Activated CD4-positive, alpha-beta T cell treated with anti-CD3 and anti-CD28 coated beads for 36 hours (primary cell): ENCODE measurements at regions of chr10 and their contacts with region 1.

Region 1: DNA sequence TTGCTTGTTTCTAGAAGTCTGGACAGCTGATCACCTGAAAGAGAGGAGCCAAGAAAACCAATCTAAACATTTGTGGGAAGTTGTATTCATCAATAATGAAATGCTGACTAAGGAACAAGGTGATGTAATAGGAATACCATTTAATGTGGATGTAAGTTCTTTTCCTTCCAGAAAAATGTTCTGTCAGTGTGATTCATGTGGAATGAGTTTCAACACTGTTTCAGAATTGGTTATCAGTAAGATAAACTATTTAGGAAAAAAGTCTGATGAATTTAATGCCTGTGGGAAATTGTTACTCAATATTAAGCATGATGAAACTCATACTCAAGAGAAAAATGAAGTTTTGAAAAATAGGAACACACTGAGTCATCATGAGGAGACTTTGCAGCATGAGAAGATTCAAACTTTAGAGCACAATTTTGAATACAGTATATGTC is 39.8 kb upstream of the ZNF37A start:
- DNase-seq: no peak
- ATAC-seq: no peak
- H3K4me3 Mint-ChIP-seq: no peak overlapping the region
- H3K27ac Mint-ChIP-seq: no peak overlapping the region
- H3K4me1 Mint-ChIP-seq: no peaks in the 10 kb centered on the region
- H3K27me3 Mint-ChIP-seq: no peaks in the 10 kb centered on the region

Region 2: DNA sequence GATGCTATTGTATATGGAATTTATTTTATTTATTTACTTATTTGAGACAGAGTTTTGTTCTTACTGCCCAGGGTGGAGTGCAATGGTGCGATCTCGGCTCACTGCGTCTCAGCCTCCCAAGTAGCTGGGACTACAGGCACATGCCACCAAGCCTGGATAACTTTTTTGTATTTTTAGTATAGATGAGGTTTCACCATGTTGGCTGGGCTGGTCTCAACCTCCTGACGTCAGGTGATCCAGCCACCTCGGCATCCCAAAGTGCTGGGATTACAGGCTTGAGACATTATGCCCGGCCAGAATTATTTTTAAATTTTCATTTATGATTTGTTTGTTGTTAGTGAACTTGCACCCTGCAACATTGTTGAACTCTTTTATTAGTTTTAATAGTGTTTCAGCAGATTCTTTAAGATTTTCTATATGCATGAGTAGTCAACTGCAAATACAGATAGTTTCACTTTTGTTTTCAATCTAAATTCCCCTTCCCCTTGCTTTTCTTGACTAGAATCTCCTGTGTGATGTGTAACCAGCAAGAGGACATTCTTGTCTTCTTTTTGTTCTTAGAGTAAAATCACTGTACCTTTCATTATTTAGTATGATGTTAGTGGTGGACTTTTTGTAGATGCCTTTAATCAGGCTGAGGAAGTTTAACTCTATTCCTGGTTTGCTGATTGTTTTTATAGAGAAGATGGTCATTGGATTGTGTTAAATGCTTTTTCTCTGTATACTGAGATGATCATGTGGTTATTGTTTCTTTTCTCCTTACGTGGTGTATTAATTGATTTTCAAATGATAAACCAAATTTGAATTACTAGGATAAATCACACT is 16.1 kb before region 1 on chr10:
- CTCF ChIA-PET with region 1: no interaction called
- POLR2A ChIA-PET with region 1: no interaction called
- intact Hi-C with region 1: no loop called
- DNase-seq: no peak
- ATAC-seq: peak; percentile 90
- H3K4me3 Mint-ChIP-seq: peak overlapping the region; percentile 56
- H3K27ac Mint-ChIP-seq: peak overlapping the region; percentile 86
- H3K4me1 Mint-ChIP-seq: peaks cover 29% of the 10 kb centered on the region
- H3K27me3 Mint-ChIP-seq: no peaks in the 10 kb centered on the region

Region 3: GRCh38 chr10:38094158-38094920 is 40.0 kb after region 1 on chr10 and contains the start of gene ZNF37A:
- CTCF ChIA-PET with region 1: no interaction called
- POLR2A ChIA-PET with region 1: no interaction called
- intact Hi-C with region 1: loop called in 1 of 2 experiments (anchors 5 kb)
- DNase-seq: peak; percentile 94
- ATAC-seq: peak; percentile 98
- H3K4me3 Mint-ChIP-seq: peak within 1 kb of the TSS; percentile 85
- H3K27ac Mint-ChIP-seq: peak within 1 kb of the TSS; percentile 90
- H3K4me1 Mint-ChIP-seq: peaks cover 31% of the 10 kb centered on the region
- H3K27me3 Mint-ChIP-seq: no peaks in the 10 kb centered on the region
- total RNA-seq, gene ZNF37A: 24.1 to 25.5 TPM

Region 4: DNA sequence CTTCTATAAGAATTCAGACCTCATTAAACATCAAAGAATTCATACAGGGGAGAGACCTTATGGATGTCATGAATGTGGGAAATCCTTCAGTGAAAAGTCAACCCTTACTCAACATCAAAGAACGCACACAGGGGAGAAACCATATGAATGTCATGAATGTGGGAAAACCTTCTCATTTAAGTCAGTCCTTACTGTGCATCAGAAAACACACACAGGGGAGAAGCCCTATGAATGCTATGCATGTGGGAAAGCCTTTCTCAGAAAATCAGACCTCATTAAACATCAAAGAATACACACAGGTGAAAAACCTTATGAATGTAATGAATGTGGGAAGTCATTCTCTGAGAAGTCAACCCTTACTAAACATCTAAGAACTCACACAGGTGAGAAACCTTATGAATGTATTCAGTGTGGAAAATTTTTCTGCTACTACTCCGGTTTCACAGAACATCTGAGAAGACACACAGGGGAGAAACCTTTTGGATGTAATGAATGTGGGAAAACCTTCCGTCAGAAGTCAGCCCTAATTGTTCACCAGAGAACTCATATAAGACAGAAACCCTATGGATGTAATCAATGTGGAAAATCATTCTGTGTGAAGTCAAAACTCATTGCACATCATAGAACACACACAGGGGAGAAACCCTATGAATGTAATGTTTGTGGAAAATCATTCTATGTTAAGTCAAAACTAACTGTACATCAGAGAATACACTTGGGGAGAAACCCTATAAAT is 63.9 kb after region 1 on chr10:
- CTCF ChIA-PET with region 1: interaction called, 3 read pairs
- POLR2A ChIA-PET with region 1: no interaction called
- intact Hi-C with region 1: loop called (anchors 2 to 10 kb)
- DNase-seq: no peak
- ATAC-seq: no peak
- H3K4me3 Mint-ChIP-seq: no peak overlapping the region
- H3K27ac Mint-ChIP-seq: no peak overlapping the region
- H3K4me1 Mint-ChIP-seq: no peaks in the 10 kb centered on the region
- H3K27me3 Mint-ChIP-seq: no peaks in the 10 kb centered on the region

Region 5: GRCh38 chr10:38127812-38128211 is 73.4 kb after region 1 on chr10:
- CTCF ChIA-PET with region 1: no interaction called
- POLR2A ChIA-PET with region 1: no interaction called
- intact Hi-C with region 1: loop called in 1 of 2 experiments (anchors 10 kb)
- DNase-seq: no peak
- ATAC-seq: no peak
- H3K4me3 Mint-ChIP-seq: no peak overlapping the region
- H3K27ac Mint-ChIP-seq: no peak overlapping the region
- H3K4me1 Mint-ChIP-seq: no peaks in the 10 kb centered on the region
- H3K27me3 Mint-ChIP-seq: no peaks in the 10 kb centered on the region